Esophagus squamous epithelium (tissue), 5 donors: ENCODE measurements at regions of chr6 and their contacts with region 1.

Region 1: DNA sequence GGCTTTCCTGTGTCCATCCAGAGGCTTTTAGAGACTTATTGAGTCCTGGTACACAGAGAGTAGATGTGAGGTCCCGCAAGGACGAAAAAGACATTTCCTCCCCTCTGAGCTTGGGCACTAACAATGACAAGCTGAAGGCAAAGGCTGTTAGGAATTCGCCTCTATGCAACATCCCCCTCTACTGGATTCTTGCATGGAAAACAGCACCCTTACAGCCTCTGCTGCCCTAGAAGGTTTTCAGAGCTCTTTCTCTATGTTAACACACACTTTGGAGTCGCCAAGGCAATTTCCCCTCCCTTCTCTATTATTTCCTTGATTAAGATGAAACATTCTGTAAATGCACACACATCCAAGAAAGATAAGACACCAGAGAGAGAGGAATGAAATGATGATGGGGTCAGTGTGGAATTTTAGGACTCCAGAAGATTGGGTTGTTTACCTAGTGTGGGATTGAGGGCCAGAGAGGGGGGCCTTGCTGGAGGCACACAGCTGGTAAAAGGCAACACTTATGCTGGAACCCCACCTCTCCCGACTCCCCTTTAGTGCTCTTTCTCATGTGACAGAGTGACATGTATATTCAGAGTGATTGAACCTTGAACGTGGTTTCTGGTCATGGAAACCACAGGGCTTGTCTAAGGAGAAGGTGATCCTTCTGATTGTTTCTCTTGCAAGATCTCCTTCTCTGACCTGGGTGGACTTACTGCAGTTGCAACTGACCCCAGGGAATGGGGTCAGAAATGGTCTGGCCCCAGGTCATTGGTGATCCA is 300.7 kb downstream of the CLIC5 start:
- DNase-seq: no peak
- H3K4me3 ChIP-seq: peak overlapping the region in 1 of 4 donors; percentile 26
- H3K27ac ChIP-seq: peak overlapping the region in 1 of 4 donors; percentile 4
- H3K4me1 ChIP-seq: peaks cover 0 to 10% (median 7%) of the 10 kb centered on the region in 3 donors
- H3K27me3 ChIP-seq: no peaks in the 10 kb centered on the region
- CTCF ChIP-seq: peak; percentile 65 to 85 (median 76)
- POLR2A ChIP-seq: no peak

Region 2: DNA sequence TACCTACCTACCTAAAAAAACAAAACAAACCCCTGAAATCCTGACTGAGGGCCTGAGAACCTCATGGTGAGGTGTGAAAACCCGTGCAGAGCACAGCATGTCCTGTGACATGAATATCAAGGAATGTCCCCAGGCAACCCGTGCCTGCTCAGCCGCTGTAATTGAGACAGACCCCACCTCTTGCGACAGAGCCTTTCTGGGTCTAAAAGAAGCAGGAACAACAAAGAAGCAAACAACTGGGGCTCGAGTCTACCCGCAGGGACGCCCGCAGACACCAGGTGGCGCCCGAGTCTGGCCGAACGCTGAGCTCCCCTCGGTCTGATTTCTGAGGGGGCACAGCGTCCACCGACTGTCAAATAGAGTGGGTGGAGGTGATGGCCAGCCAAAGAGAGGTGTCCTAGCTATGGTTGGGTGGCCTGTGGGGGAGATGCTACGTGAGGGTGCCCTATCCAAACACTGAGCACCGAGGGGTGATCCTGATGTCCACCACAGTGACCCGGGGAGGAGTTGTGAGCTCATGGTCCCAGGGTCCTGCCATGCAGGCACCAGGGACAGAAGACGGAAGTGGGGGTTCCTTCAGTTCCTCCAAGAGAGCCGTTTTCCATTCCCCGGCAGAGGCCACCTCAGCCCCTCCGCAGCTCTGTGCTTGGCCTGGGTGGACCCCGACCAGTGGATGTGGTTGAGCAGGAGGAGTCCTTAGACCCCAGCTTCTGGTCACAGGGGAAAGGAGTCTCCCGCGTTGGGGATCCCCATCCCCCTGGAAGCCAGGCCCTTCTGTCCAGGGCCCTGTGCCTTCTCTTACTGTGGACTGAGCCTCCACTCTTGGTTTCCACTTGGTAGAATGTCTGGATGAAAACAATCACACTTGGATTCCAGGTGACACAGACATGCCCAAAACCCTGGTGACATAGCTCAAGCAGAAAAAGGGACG is 1059.2 kb before region 1 on chr6:
- intact Hi-C with region 1: loop called (anchors 10 kb)
- DNase-seq: no peak
- H3K4me3 ChIP-seq: no peak overlapping the region
- H3K27ac ChIP-seq: no peak overlapping the region
- H3K4me1 ChIP-seq: peaks cover 0 to 22% (median 0%) of the 10 kb centered on the region in 3 donors
- H3K27me3 ChIP-seq: peaks cover 0 to 3% (median 0%) of the 10 kb centered on the region in 4 donors
- CTCF ChIP-seq: peak; percentile 65 to 94 (median 88)
- POLR2A ChIP-seq: no peak

Region 3: GRCh38 chr6:45421709-45422502 is 293.0 kb before region 1 on chr6:
- intact Hi-C with region 1: loop called (anchors 10 kb)
- DNase-seq: peak; percentile 22
- H3K4me3 ChIP-seq: peak overlapping the region; percentile 51 to 79 (median 58)
- H3K27ac ChIP-seq: peak overlapping the region; percentile 71 to 84 (median 80)
- H3K4me1 ChIP-seq: peaks cover 21 to 51% (median 35%) of the 10 kb centered on the region in 3 donors
- H3K27me3 ChIP-seq: peaks cover 0 to 83% (median 24%) of the 10 kb centered on the region in 4 donors
- CTCF ChIP-seq: peak in 3 of 6 experiments; percentile 17 to 29 (median 24)
- POLR2A ChIP-seq: no peak